GM12878 (cell line): ENCODE measurements at regions of chr10 and their contacts with region 1.

Region 1: GRCh38 chr10:22003079-22003913 is at the start of gene DNAJC1:
- DNase-seq: peak; percentile 83
- ATAC-seq: peak; percentile 94
- H3K4me3 ChIP-seq: peak within 1 kb of the TSS; percentile 78
- H3K27ac ChIP-seq: peak within 1 kb of the TSS; percentile 91
- H3K4me1 ChIP-seq: peaks cover 16% of the 10 kb centered on the region
- H3K27me3 ChIP-seq: no peaks in the 10 kb centered on the region
- CTCF ChIP-seq: 0 out of 6 replicates have a peak, but pooled peaks of 1 of the 3 experiments have one; percentile 1
- EP300 ChIP-seq: no peak
- POLR2A ChIP-seq: peak; percentile 89
- RAD21 ChIP-seq: no peak
- polyA plus RNA-seq, gene DNAJC1: 2.5 to 6.4 TPM

Region 2: DNA sequence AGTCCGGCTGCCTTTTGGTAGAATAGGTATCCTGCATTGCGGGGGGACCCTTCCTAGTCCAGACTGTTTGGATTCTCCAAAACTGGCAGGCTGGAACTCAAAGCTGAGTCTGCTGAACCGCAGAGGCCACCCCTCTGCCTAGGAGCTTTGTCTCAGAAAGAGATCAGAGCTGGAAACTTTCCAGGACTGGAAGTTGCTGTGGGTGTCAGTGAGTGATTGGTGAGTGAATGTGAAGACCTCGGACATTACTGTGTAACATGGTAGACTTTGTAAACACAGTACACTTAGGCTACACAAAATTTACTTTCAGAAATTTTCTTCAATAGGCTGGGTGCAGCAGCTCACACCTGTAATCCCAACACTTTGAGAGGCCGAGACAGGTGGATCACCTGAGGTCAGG is 103.6 kb before region 1 on chr10:
- CTCF ChIA-PET with region 1: no interaction called
- POLR2A ChIA-PET with region 1: no interaction called
- RAD21 ChIA-PET with region 1: no interaction called
- SMC1A ChIA-PET with region 1: no interaction called
- in situ Hi-C with region 1: no loop called
- intact Hi-C with region 1: no loop called
- DNase-seq: no peak
- ATAC-seq: no peak
- H3K4me3 ChIP-seq: no peak overlapping the region
- H3K27ac ChIP-seq: no peak overlapping the region
- H3K4me1 ChIP-seq: peaks cover 16% of the 10 kb centered on the region
- H3K27me3 ChIP-seq: no peaks in the 10 kb centered on the region
- CTCF ChIP-seq: no peak
- EP300 ChIP-seq: no peak
- POLR2A ChIP-seq: no peak
- RAD21 ChIP-seq: no peak

Region 3: GRCh38 chr10:22228943-22229801 is 225.9 kb after region 1 on chr10:
- CTCF ChIA-PET with region 1: no interaction called
- POLR2A ChIA-PET with region 1: no interaction called
- RAD21 ChIA-PET with region 1: interaction called, 3 read pairs
- SMC1A ChIA-PET with region 1: interaction called, 3 read pairs
- in situ Hi-C with region 1: no loop called
- intact Hi-C with region 1: loop called (anchors 5 kb)
- DNase-seq: peak; percentile 83
- ATAC-seq: peak; percentile 89
- H3K4me3 ChIP-seq: peak overlapping the region; percentile 68
- H3K27ac ChIP-seq: peak overlapping the region; percentile 24; the same call in 1 of the 2 replicates
- H3K4me1 ChIP-seq: peaks cover 7% of the 10 kb centered on the region; the same call in 1 of the 2 replicates
- H3K27me3 ChIP-seq: no peaks in the 10 kb centered on the region; a peak in 1 of 4 replicates
- CTCF ChIP-seq: no peak
- EP300 ChIP-seq: peak in 1 of 2 experiments; percentile 72; a peak in 2 of 4 replicates
- POLR2A ChIP-seq: peak; percentile 68
- RAD21 ChIP-seq: no peak

Region 4: DNA sequence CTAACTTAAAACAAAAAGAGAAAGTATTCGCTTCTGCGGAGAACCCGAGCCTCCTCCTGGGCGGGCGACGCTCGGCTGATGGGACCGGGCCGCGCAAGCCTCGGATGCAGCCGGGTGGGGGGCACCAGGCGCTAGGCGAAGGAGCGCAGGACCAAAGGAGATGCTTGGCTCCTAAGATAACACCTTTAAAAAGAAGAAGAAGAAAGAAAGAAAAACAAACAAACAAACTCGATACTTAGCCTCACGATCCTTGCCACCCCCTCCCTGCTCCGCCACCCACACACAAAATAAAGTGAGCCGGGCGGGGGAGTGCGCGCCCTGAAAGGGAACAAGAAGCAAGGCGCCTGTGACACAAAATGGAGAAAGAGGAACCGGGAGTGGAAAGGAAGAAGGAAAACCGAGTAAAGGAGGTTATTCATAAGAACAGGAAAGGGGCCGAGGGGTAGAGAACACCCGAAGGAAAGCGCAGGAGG is 248.5 kb after region 1 on chr10:
- CTCF ChIA-PET with region 1: no interaction called
- POLR2A ChIA-PET with region 1: no interaction called
- RAD21 ChIA-PET with region 1: no interaction called
- SMC1A ChIA-PET with region 1: no interaction called
- in situ Hi-C with region 1: no loop called
- intact Hi-C with region 1: loop called (anchors 5 kb)
- DNase-seq: no peak
- ATAC-seq: peak; percentile 66
- H3K4me3 ChIP-seq: peak overlapping the region; percentile 79
- H3K27ac ChIP-seq: peak overlapping the region; percentile 90
- H3K4me1 ChIP-seq: peaks cover 7% of the 10 kb centered on the region
- H3K27me3 ChIP-seq: peaks cover 0 to 2% of the 10 kb centered on the region in 2 experiments; a peak in 3 of 4 replicates
- CTCF ChIP-seq: no peak
- EP300 ChIP-seq: no peak
- POLR2A ChIP-seq: peak; percentile 62; the same call in 1 of the 2 replicates
- RAD21 ChIP-seq: no peak

Region 5: DNA sequence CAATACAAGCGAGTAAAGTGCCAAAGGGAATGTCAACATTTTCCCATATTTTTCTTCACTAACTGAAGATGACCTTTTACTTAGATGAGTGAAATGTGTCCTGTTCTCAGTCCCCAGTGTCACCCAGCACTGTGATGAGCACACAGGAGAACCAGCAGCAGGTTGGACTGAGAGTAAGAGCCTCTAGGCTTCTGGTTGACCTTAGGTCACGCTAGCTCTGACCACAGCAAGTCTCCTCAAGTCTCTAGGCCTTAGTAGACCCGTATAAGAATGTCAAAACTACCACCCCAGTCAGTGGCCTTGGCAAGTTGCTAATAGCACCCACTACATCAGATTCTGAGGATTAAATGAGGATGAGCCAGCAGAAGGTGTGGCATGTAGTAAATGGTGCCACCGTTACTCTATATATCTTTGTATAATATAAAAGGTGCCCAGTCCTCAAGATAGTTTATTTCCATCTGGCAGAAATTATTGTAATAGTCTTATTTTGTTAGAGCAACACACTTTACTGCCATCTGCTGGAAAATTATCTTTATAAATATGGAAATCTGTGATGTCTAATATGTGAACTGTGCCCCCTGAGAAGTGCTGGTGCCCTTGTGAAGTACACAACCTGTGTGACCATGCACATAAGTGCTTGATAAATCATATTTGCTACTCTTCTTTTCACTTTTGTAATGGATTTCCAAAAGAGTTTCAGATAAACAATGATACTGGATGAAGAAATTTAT is 417.7 kb after region 1 on chr10:
- CTCF ChIA-PET with region 1: no interaction called
- POLR2A ChIA-PET with region 1: no interaction called
- RAD21 ChIA-PET with region 1: no interaction called
- SMC1A ChIA-PET with region 1: no interaction called
- in situ Hi-C with region 1: no loop called
- intact Hi-C with region 1: loop called (anchors 5 kb)
- DNase-seq: no peak
- ATAC-seq: peak; percentile 78
- H3K4me3 ChIP-seq: no peak overlapping the region
- H3K27ac ChIP-seq: no peak overlapping the region
- H3K4me1 ChIP-seq: no peaks in the 10 kb centered on the region
- H3K27me3 ChIP-seq: no peaks in the 10 kb centered on the region
- CTCF ChIP-seq: peak in 2 of 3 experiments; percentile 16 to 27; a peak in 3 of 6 replicates
- EP300 ChIP-seq: no peak
- POLR2A ChIP-seq: no peak
- RAD21 ChIP-seq: peak; percentile 52

Region 6: GRCh38 chr10:22436884-22437619 is 433.8 kb after region 1 on chr10:
- CTCF ChIA-PET with region 1: no interaction called
- POLR2A ChIA-PET with region 1: interaction called, 3 read pairs
- RAD21 ChIA-PET with region 1: no interaction called
- SMC1A ChIA-PET with region 1: no interaction called
- in situ Hi-C with region 1: loop called (anchors 10 kb)
- intact Hi-C with region 1: loop called (anchors 5 kb)
- DNase-seq: peak; percentile 36
- ATAC-seq: peak; percentile 88
- H3K4me3 ChIP-seq: peak overlapping the region; percentile 71
- H3K27ac ChIP-seq: peak overlapping the region; percentile 45
- H3K4me1 ChIP-seq: peaks cover 10% of the 10 kb centered on the region
- H3K27me3 ChIP-seq: no peaks in the 10 kb centered on the region; a peak in 1 of 4 replicates
- CTCF ChIP-seq: 0 out of 6 replicates have a peak, but pooled peaks of 2 of the 3 experiments have one; percentile 1 to 6
- EP300 ChIP-seq: no peak
- POLR2A ChIP-seq: peak; percentile 98
- RAD21 ChIP-seq: peak; percentile 32; the same call in 1 of the 2 replicates